ENCODE measurements at regions of chr16 and their contacts with region 1.

Region 1: DNA sequence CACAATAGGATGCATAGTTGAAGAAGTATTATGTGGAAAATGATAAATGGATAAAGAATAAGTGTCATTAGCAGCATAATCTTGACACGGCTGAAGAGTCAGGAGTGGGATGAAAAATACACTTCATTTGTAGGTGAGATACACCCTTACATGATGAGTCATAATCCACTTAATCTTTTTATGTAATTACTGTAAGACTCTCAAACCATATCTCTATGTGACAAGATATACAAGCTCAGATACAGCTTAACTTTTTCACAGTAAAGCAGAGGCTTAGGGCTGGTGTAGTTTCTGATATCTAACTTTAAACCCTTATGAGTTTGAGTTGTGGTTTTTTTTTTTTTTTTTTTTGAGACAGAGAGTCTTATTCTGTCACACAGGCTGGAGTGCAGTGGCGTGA is 101.2 kb downstream of the FTO start:
- DNase-seq: no peak
- ATAC-seq: no peak
- H3K4me3 ChIP-seq: no peak overlapping the region
- H3K4me3 Mint-ChIP-seq: no peak overlapping the region
- H3K27ac ChIP-seq: no peak overlapping the region
- H3K27ac Mint-ChIP-seq: no peak overlapping the region
- H3K4me1 ChIP-seq: no peaks in the 10 kb centered on the region
- H3K4me1 Mint-ChIP-seq: peaks cover 44 to 53% (median 48%) of the 10 kb centered on the region in 3 donors
- H3K27me3 ChIP-seq: no peaks in the 10 kb centered on the region
- H3K27me3 Mint-ChIP-seq: no peaks in the 10 kb centered on the region

Region 2: GRCh38 chr16:54703339-54703738 is 898.2 kb after region 1 on chr16:
- CTCF ChIA-PET with region 1: interaction called in 1 of 2 experiments, 10 read pairs
- POLR2A ChIA-PET with region 1: no interaction called
- DNase-seq: no peak
- ATAC-seq: no peak
- H3K4me3 ChIP-seq: no peak overlapping the region
- H3K4me3 Mint-ChIP-seq: no peak overlapping the region
- H3K27ac ChIP-seq: no peak overlapping the region
- H3K27ac Mint-ChIP-seq: no peak overlapping the region
- H3K4me1 ChIP-seq: no peaks in the 10 kb centered on the region
- H3K4me1 Mint-ChIP-seq: no peaks in the 10 kb centered on the region
- H3K27me3 ChIP-seq: peaks cover 0 to 4% of the 10 kb centered on the region in 2 experiments
- H3K27me3 Mint-ChIP-seq: peaks cover 2 to 7% of the 10 kb centered on the region in 2 donors

Measured in T-cell (primary cell).